ENCODE measurements at regions of chr16 and their contacts with region 1.

Region 1: GRCh38 chr16:21190599-21190998 is 20.8 kb downstream of the ZP2 start:
- DNase-seq: no peak
- H3K4me3 ChIP-seq: no peak overlapping the region
- H3K4me3 Mint-ChIP-seq: no peak overlapping the region
- H3K27ac Mint-ChIP-seq: no peak overlapping the region
- H3K4me1 ChIP-seq: peaks cover 3% of the 10 kb centered on the region; the same call in 1 of the 2 replicates
- H3K4me1 Mint-ChIP-seq: no peaks in the 10 kb centered on the region
- H3K27me3 ChIP-seq: no peaks in the 10 kb centered on the region; the same call in 1 of the 2 replicates
- H3K27me3 Mint-ChIP-seq: no peaks in the 10 kb centered on the region
- CTCF ChIP-seq: no peak

Region 2: GRCh38 chr16:21233521-21234150 is 43.0 kb after region 1 on chr16 and contains the start of gene ANKS4B:
- CTCF ChIA-PET with region 1: interaction called, 5 read pairs
- POLR2A ChIA-PET with region 1: no interaction called
- intact Hi-C with region 1: loop called (anchors 2 kb)
- DNase-seq: peak; percentile 54 to 71
- H3K4me3 ChIP-seq: peak within 1 kb of the TSS; percentile 43
- H3K4me3 Mint-ChIP-seq: peak within 1 kb of the TSS; percentile 76
- H3K27ac Mint-ChIP-seq: peak within 1 kb of the TSS; percentile 62
- H3K4me1 ChIP-seq: peaks cover 22% of the 10 kb centered on the region
- H3K4me1 Mint-ChIP-seq: peaks cover 20% of the 10 kb centered on the region
- H3K27me3 ChIP-seq: no peaks in the 10 kb centered on the region
- H3K27me3 Mint-ChIP-seq: no peaks in the 10 kb centered on the region
- CTCF ChIP-seq: no peak
- total RNA-seq, gene ANKS4B: 3.5 and 4.8 TPM in 2 replicates

Region 3: GRCh38 chr16:21267298-21267697 is 76.7 kb after region 1 on chr16:
- CTCF ChIA-PET with region 1: no interaction called
- POLR2A ChIA-PET with region 1: no interaction called
- intact Hi-C with region 1: no loop called
- DNase-seq: no peak
- H3K4me3 ChIP-seq: no peak overlapping the region
- H3K4me3 Mint-ChIP-seq: no peak overlapping the region
- H3K27ac Mint-ChIP-seq: no peak overlapping the region
- H3K4me1 ChIP-seq: peaks cover 7% of the 10 kb centered on the region; the same call in 1 of the 2 replicates
- H3K4me1 Mint-ChIP-seq: peaks cover 12% of the 10 kb centered on the region
- H3K27me3 ChIP-seq: no peaks in the 10 kb centered on the region
- H3K27me3 Mint-ChIP-seq: no peaks in the 10 kb centered on the region
- CTCF ChIP-seq: no peak

Measured in Caco-2 (cell line).